ENCODE measurements at regions of chr21 and their contacts with region 1.

Region 1: GRCh38 chr21:25607151-25608043 is at the start of gene MRPL39:
- DNase-seq: peak; percentile 94
- ATAC-seq: peak; percentile 96
- H3K4me3 Mint-ChIP-seq: peak within 1 kb of the TSS; percentile 98
- H3K27ac Mint-ChIP-seq: peak within 1 kb of the TSS; percentile 98
- H3K4me1 Mint-ChIP-seq: peaks cover 37% of the 10 kb centered on the region
- H3K27me3 Mint-ChIP-seq: no peaks in the 10 kb centered on the region
- total RNA-seq, gene MRPL39: 43.5 to 44.8 TPM

Region 2: DNA sequence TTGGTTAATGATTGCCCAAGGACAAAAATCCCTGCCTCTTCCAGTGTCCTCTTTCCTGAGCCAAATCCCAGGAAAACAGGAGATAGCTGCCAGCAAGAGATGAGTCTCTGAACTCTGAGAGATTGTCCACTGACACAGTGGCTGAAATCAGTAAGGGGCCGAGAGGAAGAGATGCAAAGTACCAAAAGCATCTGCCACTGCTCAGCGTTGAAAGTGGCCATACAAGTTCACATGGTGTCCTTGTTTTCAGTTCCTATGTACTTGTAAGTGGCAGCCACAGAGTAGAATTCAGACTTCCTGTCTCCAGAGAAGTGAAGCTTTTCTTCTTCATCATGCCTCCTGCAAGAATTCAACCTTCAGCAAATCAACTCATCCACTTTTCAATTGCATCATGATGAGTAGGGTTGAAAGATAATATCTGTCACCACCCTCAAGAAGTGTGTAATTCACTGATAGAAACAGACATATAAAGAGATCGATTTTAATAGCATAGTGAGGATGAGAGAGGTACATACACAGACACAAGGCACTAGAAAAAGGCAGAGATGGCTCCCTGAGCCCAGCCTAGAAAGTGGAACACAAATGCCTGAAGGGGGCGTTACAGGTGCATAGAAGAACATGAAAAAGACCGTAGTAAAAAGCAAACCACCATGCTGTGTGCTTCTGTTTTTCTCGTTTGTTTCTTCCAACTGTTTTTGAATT is 185.9 kb before region 1 on chr21:
- CTCF ChIA-PET with region 1: interaction called, 12 read pairs
- DNase-seq: peak; percentile 84
- ATAC-seq: peak; percentile 97
- H3K4me3 Mint-ChIP-seq: peak overlapping the region; percentile 66
- H3K27ac Mint-ChIP-seq: peak overlapping the region; percentile 91
- H3K4me1 Mint-ChIP-seq: peaks cover 47% of the 10 kb centered on the region
- H3K27me3 Mint-ChIP-seq: no peaks in the 10 kb centered on the region

Region 3: GRCh38 chr21:25626757-25627156 is 19.4 kb after region 1 on chr21:
- CTCF ChIA-PET with region 1: interaction called, 10 read pairs
- DNase-seq: no peak
- ATAC-seq: no peak
- H3K4me3 Mint-ChIP-seq: no peak overlapping the region
- H3K27ac Mint-ChIP-seq: no peak overlapping the region
- H3K4me1 Mint-ChIP-seq: no peaks in the 10 kb centered on the region
- H3K27me3 Mint-ChIP-seq: no peaks in the 10 kb centered on the region

Region 4: GRCh38 chr21:25639551-25640201 is 32.3 kb after region 1 on chr21:
- CTCF ChIA-PET with region 1: interaction called, 15 read pairs
- DNase-seq: peak; percentile 62
- ATAC-seq: peak; percentile 83
- H3K4me3 Mint-ChIP-seq: peak overlapping the region; percentile 66
- H3K27ac Mint-ChIP-seq: no peak overlapping the region
- H3K4me1 Mint-ChIP-seq: peaks cover 30% of the 10 kb centered on the region
- H3K27me3 Mint-ChIP-seq: peaks cover 43% of the 10 kb centered on the region

Region 5: DNA sequence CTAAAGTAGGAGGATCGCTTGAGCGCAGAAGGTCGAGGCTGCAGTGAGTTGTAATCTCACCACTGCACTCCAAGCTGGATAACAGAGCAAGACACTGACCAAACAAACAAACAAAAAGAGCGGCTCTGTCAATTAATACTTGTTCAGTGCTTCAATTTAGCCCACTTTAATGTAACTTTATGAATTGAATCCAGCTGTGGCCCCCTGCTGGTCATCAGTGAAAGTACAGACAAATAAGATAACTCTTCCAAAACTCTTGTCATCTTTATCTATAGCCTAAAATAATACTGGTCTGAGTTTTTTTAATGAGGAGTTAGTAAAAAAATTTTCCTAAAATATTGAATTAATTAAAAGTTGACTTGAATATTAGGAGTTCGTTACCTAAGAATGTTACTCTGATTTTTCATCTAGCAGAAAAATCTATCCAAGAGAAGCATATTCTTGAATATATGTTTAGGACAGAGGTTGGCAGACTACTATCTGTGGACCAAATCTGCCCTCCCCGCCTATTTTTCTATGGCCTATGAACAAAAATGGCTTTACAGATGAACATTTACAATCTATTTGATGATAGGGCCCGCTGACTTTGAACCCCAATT is 101.2 kb after region 1 on chr21:
- CTCF ChIA-PET with region 1: interaction called, 15 read pairs
- DNase-seq: peak; percentile 51
- ATAC-seq: peak; percentile 33
- H3K4me3 Mint-ChIP-seq: no peak overlapping the region
- H3K27ac Mint-ChIP-seq: no peak overlapping the region
- H3K4me1 Mint-ChIP-seq: peaks cover 4% of the 10 kb centered on the region
- H3K27me3 Mint-ChIP-seq: no peaks in the 10 kb centered on the region

Region 6: DNA sequence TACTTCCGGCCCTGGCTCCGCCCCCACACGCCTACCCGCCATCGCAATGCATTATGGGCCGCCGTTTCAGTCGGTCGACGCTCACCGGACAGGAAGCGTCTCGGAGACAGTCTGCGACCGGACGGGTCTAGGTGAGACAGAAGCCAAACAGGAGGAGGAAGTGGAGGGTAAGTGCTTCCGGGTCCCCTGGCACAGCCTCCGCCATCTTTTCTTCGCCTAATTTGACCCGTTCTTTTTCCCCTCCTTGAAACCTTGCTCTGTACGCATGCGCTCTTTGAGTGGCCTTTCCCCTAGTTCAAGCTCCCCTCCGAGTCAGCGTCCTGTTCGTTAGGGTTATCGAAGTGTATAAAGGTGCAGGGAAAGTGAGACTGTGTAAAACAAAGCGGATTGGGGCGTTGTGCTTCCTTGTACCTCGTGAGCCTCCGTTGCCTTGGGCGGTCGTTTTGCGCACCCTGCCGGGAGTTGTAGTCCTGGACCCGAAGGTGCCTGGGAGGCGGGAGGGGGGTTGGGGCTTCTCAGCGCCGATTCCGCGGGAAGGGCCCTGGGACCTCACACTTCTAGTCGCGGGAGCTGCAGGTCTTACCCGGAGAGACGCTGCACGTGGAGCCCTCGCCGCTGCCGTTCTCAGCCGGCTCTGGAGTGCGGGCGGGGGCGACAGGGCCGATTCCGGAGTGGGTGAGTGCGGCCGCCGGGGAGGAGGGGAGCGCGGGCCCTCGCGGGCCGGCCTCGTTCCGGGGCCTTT is 127.7 kb after region 1 on chr21 and contains the starts of genes ATP5PF and GABPA:
- CTCF ChIA-PET with region 1: interaction called, 16 read pairs
- DNase-seq: peak; percentile 98
- ATAC-seq: peak; percentile 94
- H3K4me3 Mint-ChIP-seq: peak within 1 kb of the TSS; percentile 95
- H3K27ac Mint-ChIP-seq: peak within 1 kb of the TSS; percentile 100
- H3K4me1 Mint-ChIP-seq: peaks cover 36% of the 10 kb centered on the region
- H3K27me3 Mint-ChIP-seq: no peaks in the 10 kb centered on the region
- total RNA-seq, gene ATP5PF: 114 to 131 TPM
- total RNA-seq, gene GABPA: 23.9 to 27.1 TPM

Region 7: GRCh38 chr21:25801217-25802014 is 194.0 kb after region 1 on chr21:
- CTCF ChIA-PET with region 1: interaction called, 17 read pairs
- DNase-seq: peak; percentile 92
- ATAC-seq: peak; percentile 100
- H3K4me3 Mint-ChIP-seq: no peak overlapping the region
- H3K27ac Mint-ChIP-seq: no peak overlapping the region
- H3K4me1 Mint-ChIP-seq: peaks cover 7% of the 10 kb centered on the region
- H3K27me3 Mint-ChIP-seq: peaks cover 37% of the 10 kb centered on the region

Measured in activated CD8-positive, alpha-beta memory T cell treated with anti-CD3 and anti-CD28 coated beads, Interleukin-2, amount 10 ng/mL, durations not matched to agents 7 days and 5 days (primary cell).